ENCODE measurements at regions of chr2 and their contacts with region 1.

Region 1: GRCh38 chr2:168455648-168456520 is at the start of gene CERS6:
- DNase-seq: peak; percentile 96 to 97
- ATAC-seq: peak; percentile 93
- total RNA-seq, gene CERS6: 64.4 to 67.2 TPM

Region 2: GRCh38 chr2:168336864-168337263 is 119.0 kb before region 1 on chr2:
- intact Hi-C with region 1: no loop called
- DNase-seq: peak; percentile 74 to 76
- ATAC-seq: peak; percentile 98

Region 3: GRCh38 chr2:168705534-168706470 is 249.9 kb after region 1 on chr2:
- intact Hi-C with region 1: loop called in 1 of 2 experiments (anchors 10 kb)
- DNase-seq: peak in 1 of 2 donors; percentile 25
- ATAC-seq: peak; percentile 77